ENCODE measurements at regions of chr10 and their contacts with region 1.

Region 1: DNA sequence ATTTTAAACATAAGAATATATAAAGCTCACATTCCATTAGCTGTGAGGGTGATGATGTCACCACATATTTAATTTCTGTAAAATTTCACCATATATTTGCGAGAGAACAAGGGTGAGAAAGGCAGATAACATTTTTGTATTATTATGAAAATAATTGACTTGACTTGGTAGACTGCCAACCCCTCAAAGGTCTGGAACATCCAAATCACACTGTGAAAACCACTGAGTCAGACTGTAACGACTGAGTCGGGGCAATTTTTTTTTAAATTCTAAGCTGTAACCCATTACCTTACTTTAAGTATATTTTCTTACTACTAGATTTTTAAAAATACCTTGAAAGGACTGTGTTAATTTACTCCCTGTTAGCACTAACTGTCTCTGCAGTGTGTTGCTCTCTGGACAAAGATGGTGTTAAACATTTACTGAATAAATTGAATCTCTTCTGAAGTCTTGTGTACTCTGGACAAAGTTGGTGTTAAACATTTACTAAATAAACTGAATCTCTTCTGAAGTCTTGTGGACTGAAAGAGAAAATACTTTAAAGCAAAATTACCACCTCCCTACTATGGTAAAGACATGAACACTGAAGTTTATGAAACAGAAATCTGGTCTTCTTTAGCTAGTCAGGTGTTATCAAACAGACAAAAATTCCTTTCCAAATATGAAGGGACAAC is 14.1 kb downstream of the PDZD8 start:
- DNase-seq: no peak
- H3K4me3 ChIP-seq: 0 out of 2 replicates have a peak overlapping the region, but pooled peaks have one; percentile 22
- H3K4me3 Mint-ChIP-seq: peak overlapping the region; percentile 65
- H3K27ac Mint-ChIP-seq: no peak overlapping the region
- H3K4me1 ChIP-seq: peaks cover 63% of the 10 kb centered on the region
- H3K4me1 Mint-ChIP-seq: peaks cover 33% of the 10 kb centered on the region
- H3K27me3 ChIP-seq: no peaks in the 10 kb centered on the region
- H3K27me3 Mint-ChIP-seq: no peaks in the 10 kb centered on the region
- CTCF ChIP-seq: no peak

Region 2: GRCh38 chr10:117284716-117285494 is 76.2 kb before region 1 on chr10:
- CTCF ChIA-PET with region 1: no interaction called
- POLR2A ChIA-PET with region 1: no interaction called
- intact Hi-C with region 1: no loop called
- DNase-seq: no peak
- H3K4me3 ChIP-seq: no peak overlapping the region
- H3K4me3 Mint-ChIP-seq: no peak overlapping the region
- H3K27ac Mint-ChIP-seq: no peak overlapping the region
- H3K4me1 ChIP-seq: no peaks in the 10 kb centered on the region
- H3K4me1 Mint-ChIP-seq: no peaks in the 10 kb centered on the region
- H3K27me3 ChIP-seq: no peaks in the 10 kb centered on the region
- H3K27me3 Mint-ChIP-seq: no peaks in the 10 kb centered on the region
- CTCF ChIP-seq: no peak

Region 3: DNA sequence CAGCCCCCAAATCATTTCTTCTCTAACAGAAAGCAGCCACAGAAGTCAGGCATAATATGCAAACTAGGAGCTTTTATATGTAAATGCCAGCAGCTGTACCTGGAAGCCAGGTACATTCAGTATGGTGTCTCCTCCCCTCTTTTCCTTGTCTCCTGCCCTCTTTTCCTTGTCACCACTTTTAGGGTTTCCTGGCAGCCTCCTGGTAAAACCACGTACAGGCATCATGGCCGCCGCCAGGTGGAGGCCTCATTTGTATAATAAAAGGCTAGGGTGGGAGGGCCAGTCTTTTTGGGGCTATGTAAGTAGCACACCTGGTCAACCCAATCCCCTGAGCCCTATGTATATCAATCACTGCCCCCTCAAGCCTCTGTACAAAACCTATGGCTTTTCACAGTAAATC is 14.6 kb before region 1 on chr10:
- CTCF ChIA-PET with region 1: no interaction called
- POLR2A ChIA-PET with region 1: no interaction called
- intact Hi-C with region 1: loop called (anchors 2 kb)
- DNase-seq: no peak
- H3K4me3 ChIP-seq: no peak overlapping the region
- H3K4me3 Mint-ChIP-seq: no peak overlapping the region
- H3K27ac Mint-ChIP-seq: peak overlapping the region; percentile 17
- H3K4me1 ChIP-seq: peaks cover 37% of the 10 kb centered on the region
- H3K4me1 Mint-ChIP-seq: peaks cover 44% of the 10 kb centered on the region
- H3K27me3 ChIP-seq: no peaks in the 10 kb centered on the region
- H3K27me3 Mint-ChIP-seq: no peaks in the 10 kb centered on the region
- CTCF ChIP-seq: no peak

Region 4: GRCh38 chr10:117375360-117376178 is 14.4 kb after region 1 on chr10 and contains the start of gene PDZD8:
- CTCF ChIA-PET with region 1: interaction called, 4 read pairs
- POLR2A ChIA-PET with region 1: no interaction called
- intact Hi-C with region 1: loop called (anchors 1 kb)
- DNase-seq: peak; percentile 90 to 95
- H3K4me3 ChIP-seq: peak within 1 kb of the TSS; percentile 86
- H3K4me3 Mint-ChIP-seq: peak within 1 kb of the TSS; percentile 94
- H3K27ac Mint-ChIP-seq: peak within 1 kb of the TSS; percentile 90
- H3K4me1 ChIP-seq: peaks cover 14% of the 10 kb centered on the region
- H3K4me1 Mint-ChIP-seq: peaks cover 11% of the 10 kb centered on the region
- H3K27me3 ChIP-seq: no peaks in the 10 kb centered on the region
- H3K27me3 Mint-ChIP-seq: peaks cover 3% of the 10 kb centered on the region
- CTCF ChIP-seq: no peak
- total RNA-seq, gene PDZD8: 49.4 and 54.3 TPM in 2 replicates

Region 5: DNA sequence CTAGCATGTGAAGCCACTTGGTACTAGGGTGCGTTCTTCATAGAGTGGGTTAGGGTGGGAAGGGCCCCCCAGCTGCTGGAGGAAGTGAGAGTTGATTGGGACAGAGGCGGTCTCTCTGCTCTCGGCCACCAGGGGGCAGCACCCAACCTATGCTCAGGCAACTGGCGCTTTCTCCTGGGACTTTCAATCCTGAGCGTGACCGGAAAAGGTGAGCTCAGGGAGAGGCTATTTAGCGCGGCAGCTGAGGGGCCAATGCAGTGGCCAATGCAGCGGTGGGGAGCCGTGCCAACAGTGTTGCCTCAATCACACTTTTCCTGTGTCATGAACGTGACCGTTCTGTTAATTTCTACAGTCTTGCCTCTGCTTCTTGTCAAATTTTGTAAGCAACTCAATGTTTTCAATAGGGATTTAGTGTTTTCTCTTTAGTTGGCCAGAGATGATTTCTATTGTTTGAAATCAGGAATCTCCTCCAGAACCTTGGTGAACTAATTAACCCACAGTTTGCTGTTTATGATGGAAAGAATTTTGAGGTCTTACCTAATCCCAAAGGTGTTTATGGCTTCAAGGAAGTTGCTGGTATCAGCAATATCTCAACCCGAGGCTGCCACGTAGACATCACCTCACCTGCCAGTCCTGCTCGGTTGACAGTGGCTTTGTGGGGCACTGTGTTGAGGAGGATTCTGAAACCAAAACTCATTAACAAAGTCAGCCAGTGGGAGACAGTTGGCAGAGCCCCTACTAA is 82.0 kb after region 1 on chr10:
- CTCF ChIA-PET with region 1: no interaction called
- POLR2A ChIA-PET with region 1: interaction called, 19 read pairs
- intact Hi-C with region 1: no loop called
- DNase-seq: peak in 1 of 2 experiments; percentile 57
- H3K4me3 ChIP-seq: no peak overlapping the region
- H3K4me3 Mint-ChIP-seq: no peak overlapping the region
- H3K27ac Mint-ChIP-seq: no peak overlapping the region
- H3K4me1 ChIP-seq: no peaks in the 10 kb centered on the region
- H3K4me1 Mint-ChIP-seq: no peaks in the 10 kb centered on the region
- H3K27me3 ChIP-seq: no peaks in the 10 kb centered on the region
- H3K27me3 Mint-ChIP-seq: no peaks in the 10 kb centered on the region
- CTCF ChIP-seq: peak; percentile 47 to 86

Measured in Caco-2 (cell line).